ENCODE measurements at regions of chr14 and their contacts with region 1.

Region 1: DNA sequence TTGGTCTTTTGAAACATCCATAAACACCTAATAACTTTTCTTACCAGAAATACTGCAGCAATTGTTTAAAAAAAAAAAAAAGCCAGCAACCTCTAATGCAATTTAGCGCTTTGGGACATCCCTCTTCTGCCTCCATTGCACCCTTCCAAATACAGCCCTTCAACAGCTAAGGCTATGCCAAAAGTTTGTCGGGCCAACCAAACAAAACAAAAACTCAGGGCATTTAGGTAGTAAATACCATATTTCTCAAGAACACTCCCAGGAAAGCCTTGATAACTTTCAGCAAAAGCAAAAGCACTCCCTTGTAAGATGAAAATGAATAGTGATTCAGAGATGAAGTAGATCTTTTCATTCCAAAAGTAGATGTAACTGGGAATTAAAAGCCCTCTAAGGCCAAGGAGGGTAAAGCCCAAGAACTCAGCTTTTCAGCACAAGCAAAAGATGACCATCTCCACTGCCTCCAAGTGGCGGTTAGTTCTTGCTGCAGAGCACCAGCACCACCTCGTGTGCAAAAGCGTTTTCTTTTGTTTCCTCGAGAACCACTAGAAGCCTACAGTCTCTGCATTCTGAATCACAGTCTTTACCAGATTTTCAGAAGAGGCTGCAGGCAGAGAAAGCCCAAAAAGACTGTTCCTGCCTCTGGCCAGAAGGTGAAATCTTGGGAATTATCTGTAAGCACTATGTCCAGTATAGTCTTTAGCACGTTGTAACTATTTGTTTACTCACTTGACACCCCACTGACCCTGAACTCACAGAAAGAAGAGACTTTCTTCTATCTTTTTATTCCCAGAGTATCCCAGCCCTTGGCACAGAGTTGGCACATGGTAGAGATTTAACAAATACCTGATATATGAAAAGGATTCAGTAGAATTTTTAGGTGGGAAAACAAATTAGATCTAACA is 53.1 kb downstream of the SIX6 start:
- DNase-seq: peak; percentile 94
- ATAC-seq: peak; percentile 97
- H3K4me3 ChIP-seq: no peak overlapping the region
- H3K27ac ChIP-seq: no peak overlapping the region
- H3K4me1 ChIP-seq: peaks cover 4% of the 10 kb centered on the region; the same call in 1 of the 2 replicates
- H3K27me3 ChIP-seq: no peaks in the 10 kb centered on the region
- CTCF ChIP-seq: peak; percentile 98

Region 2: GRCh38 chr14:60064491-60065072 is 497.5 kb before region 1 on chr14:
- CTCF ChIA-PET with region 1: no interaction called
- POLR2A ChIA-PET with region 1: no interaction called
- intact Hi-C with region 1: loop called (anchors 10 kb)
- DNase-seq: peak; percentile 87
- ATAC-seq: peak; percentile 49
- H3K4me3 ChIP-seq: no peak overlapping the region
- H3K27ac ChIP-seq: no peak overlapping the region
- H3K4me1 ChIP-seq: peaks cover 19% of the 10 kb centered on the region
- H3K27me3 ChIP-seq: no peaks in the 10 kb centered on the region
- CTCF ChIP-seq: peak; percentile 98

Region 3: GRCh38 chr14:60331201-60332045 is 230.7 kb before region 1 on chr14:
- CTCF ChIA-PET with region 1: interaction called, 5 read pairs
- POLR2A ChIA-PET with region 1: no interaction called
- intact Hi-C with region 1: loop called (anchors 1 kb)
- DNase-seq: peak; percentile 96
- ATAC-seq: peak; percentile 54
- H3K4me3 ChIP-seq: peak overlapping the region; percentile 48
- H3K27ac ChIP-seq: no peak overlapping the region
- H3K4me1 ChIP-seq: no peaks in the 10 kb centered on the region
- H3K27me3 ChIP-seq: peaks cover 14% of the 10 kb centered on the region; the same call in 1 of the 2 replicates
- CTCF ChIP-seq: peak; percentile 100

Region 4: GRCh38 chr14:60420050-60420449 is 142.0 kb before region 1 on chr14:
- CTCF ChIA-PET with region 1: no interaction called
- POLR2A ChIA-PET with region 1: no interaction called
- intact Hi-C with region 1: loop called (anchors 5 kb)
- DNase-seq: no peak
- ATAC-seq: no peak
- H3K4me3 ChIP-seq: no peak overlapping the region
- H3K27ac ChIP-seq: no peak overlapping the region
- H3K4me1 ChIP-seq: peaks cover 4% of the 10 kb centered on the region
- H3K27me3 ChIP-seq: no peaks in the 10 kb centered on the region
- CTCF ChIP-seq: no peak

Region 5: DNA sequence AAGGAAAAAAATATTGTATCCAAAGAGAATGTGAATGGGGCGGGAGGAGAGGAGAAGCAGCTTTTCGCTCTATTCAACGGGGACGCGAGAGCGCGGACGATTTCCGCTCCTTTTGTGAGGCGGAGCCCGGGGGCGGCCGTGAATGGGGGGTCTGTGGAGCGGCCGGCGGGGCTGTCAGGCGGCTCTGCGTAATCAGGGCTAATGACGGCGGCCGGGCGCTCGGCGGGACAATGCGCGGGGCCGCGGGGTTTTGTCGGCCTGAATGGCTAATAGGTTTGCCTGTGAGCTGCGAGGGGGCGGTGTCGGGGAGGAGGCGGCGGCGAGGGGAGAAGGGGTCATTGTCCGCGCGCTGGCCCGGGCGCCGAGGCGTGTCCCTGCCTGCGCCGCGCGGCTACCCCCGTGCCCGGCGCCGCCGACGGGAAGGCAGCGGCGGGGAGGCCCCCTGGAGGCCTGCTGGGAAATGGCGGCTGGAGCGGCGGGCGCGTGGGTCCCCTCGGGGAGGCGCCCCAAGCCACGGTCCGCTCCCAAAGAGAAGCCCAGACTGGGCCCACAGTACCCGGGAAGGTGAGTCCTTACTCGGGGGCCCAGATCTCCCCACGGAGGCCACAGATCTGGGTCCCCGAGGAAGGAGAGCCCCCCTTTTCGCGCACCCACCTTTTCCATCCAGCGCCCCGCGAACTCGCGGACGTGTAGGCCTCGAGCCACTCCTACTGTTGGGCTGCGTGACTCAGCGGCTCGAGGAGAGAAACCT is 47.2 kb before region 1 on chr14:
- CTCF ChIA-PET with region 1: no interaction called
- POLR2A ChIA-PET with region 1: interaction called, 3 read pairs
- intact Hi-C with region 1: loop called (anchors 2 kb)
- DNase-seq: peak; percentile 22
- ATAC-seq: peak; percentile 79
- H3K4me3 ChIP-seq: peak overlapping the region; percentile 64
- H3K27ac ChIP-seq: no peak overlapping the region
- H3K4me1 ChIP-seq: no peaks in the 10 kb centered on the region
- H3K27me3 ChIP-seq: peaks cover 49% of the 10 kb centered on the region
- CTCF ChIP-seq: peak; percentile 14; the same call in 1 of the 2 replicates

Region 6: DNA sequence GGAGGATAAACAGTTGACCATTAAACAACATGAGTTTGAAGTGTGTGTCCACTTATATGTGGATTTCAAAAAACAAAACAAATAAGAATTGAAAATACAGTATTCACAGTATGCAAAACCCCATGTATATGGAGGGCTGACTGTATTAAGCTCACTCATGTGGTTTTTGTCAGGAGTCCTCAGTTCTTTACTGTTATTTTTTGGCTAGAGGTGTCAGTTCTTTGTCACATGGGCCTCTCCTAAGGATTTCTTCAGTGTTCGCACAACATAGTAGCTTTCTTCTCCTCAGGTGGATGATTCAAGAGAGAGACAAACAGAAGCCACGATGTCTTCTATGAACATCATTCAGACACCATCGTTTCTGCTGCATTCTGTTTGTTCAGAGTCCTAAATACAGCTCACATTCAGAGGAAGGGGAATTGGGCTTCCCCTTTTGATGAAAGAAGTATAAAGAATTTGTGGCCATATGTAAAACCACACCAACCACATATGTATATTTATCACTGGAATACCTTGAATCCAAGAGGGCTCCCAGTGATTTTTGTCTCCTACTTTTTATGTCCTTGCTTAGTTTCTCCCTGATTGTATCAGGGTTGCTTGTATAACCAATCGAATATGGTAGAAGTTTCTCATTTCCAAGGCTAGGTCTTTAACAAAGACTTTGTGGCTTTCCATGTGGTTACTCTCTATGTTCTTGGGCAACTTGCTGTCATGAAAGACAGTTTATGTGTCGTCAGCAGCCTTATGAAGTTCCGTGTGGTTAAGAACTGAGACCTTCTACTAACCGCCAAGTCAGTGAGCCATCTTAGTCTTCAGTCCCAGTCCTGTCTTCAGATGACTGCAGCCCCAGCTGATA is 191.4 kb after region 1 on chr14:
- CTCF ChIA-PET with region 1: no interaction called
- POLR2A ChIA-PET with region 1: no interaction called
- intact Hi-C with region 1: no loop called
- DNase-seq: no peak
- ATAC-seq: no peak
- H3K4me3 ChIP-seq: no peak overlapping the region
- H3K27ac ChIP-seq: no peak overlapping the region
- H3K4me1 ChIP-seq: peaks cover 30% of the 10 kb centered on the region
- H3K27me3 ChIP-seq: no peaks in the 10 kb centered on the region
- CTCF ChIP-seq: no peak

Measured in PC-3 (cell line).